Right ventricle myocardium superior (tissue), 1 donor: ENCODE measurements at regions of chr15 and their contacts with region 1.

Region 1: GRCh38 chr15:79184465-79184892 is 93.9 kb upstream of the RASGRF1 start:
- DNase-seq: peak; percentile 84
- ATAC-seq: peak; percentile 78

Region 2: GRCh38 chr15:78368651-78369050 is 815.8 kb before region 1 on chr15:
- intact Hi-C with region 1: no loop called
- DNase-seq: no peak
- ATAC-seq: no peak

Region 3: DNA sequence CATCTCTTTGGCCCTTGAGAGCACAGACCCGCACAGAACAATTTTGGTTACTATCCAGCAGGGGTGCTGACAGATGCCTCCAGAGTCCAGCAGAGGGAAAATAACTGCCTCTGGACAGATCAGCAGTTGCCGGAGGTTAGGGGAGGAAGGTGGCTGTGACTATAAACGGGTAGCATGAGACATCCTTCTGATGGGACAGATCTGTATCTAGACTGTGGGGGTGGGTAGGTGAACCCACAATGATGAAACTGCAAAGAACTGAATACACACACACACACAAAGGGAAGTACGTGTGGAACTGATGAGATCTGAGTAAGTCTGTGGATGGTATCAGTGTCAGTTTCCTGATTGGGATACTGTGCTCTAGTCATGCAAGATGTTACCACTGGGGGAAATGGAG is 394.4 kb before region 1 on chr15:
- intact Hi-C with region 1: no loop called
- DNase-seq: no peak
- ATAC-seq: peak; percentile 87

Region 4: DNA sequence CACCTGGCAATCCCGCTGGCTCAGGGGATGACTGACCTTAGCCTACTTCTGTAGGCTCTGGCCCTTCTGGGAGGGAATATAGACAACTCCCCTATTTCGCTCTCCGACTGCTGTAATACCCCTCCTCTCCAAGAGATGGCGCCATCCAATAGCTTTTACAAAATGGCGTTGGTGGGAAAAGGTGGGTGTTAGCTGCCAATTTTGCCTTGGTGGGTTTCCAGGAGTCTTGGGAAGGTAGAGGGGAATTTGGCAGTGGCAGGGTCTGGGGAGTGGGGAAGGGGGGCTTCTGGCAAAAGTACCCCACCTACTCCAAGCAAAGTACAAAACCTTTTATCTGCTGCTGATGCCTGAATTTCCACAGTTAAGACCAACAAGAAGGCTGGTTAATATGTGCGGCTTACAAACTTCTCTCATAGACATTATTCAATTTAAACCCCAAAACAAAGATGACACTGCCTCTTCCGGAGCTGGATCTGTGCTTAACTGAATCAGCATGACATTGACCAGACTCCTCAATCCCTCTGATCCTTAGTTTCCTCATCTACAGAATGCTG is 156.0 kb before region 1 on chr15:
- intact Hi-C with region 1: loop called (anchors 1 kb)
- DNase-seq: no peak
- ATAC-seq: no peak